Mammary epithelial cell (primary cell): ENCODE measurements at regions of chr14 and their contacts with region 1.

Region 1: DNA sequence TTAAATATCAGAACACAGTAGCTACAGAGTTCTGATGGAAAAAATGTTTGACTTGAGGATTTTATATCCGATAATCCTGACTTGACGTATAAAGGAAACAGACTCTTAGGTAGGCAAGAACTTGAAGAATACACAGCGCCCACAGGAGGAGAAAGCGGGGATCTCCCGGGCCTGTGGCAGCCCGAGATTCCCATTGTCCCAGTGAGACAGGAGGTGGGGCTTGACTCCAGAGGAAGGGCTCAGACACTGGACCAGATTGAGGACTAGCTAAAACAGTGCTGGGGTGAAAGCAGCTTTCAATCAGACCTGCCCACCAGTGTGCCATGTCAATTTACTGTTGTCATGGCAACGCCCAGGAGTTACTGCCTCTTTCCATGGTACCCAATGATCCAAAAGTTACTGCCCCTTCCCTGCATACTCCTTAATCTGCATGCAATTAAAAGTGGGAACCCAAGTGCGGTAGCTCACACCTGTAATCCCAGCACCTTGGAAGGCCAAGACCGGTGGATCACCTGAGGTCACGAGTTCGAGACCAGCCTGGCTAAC is 51.0 kb upstream of the C14orf180 start:
- DNase-seq: no peak
- H3K4me3 ChIP-seq: no peak overlapping the region
- H3K27ac ChIP-seq: no peak overlapping the region
- H3K4me1 ChIP-seq: no peaks in the 10 kb centered on the region
- H3K27me3 ChIP-seq: no peaks in the 10 kb centered on the region
- CTCF ChIP-seq: no peak

Region 2: GRCh38 chr14:104477666-104478380 is 50.7 kb before region 1 on chr14:
- CTCF ChIA-PET with region 1: no interaction called
- dilution Hi-C with region 1: loop called (anchors 5 kb)
- in situ Hi-C with region 1: no loop called
- intact Hi-C with region 1: no loop called
- DNase-seq: no peak
- H3K4me3 ChIP-seq: no peak overlapping the region
- H3K27ac ChIP-seq: no peak overlapping the region
- H3K4me1 ChIP-seq: no peaks in the 10 kb centered on the region
- H3K27me3 ChIP-seq: no peaks in the 10 kb centered on the region
- CTCF ChIP-seq: no peak

Region 3: GRCh38 chr14:104610749-104611310 is 82.3 kb after region 1 on chr14:
- CTCF ChIA-PET with region 1: no interaction called
- dilution Hi-C with region 1: loop called (anchors 10 kb)
- in situ Hi-C with region 1: no loop called
- intact Hi-C with region 1: no loop called
- DNase-seq: no peak
- H3K4me3 ChIP-seq: no peak overlapping the region
- H3K27ac ChIP-seq: no peak overlapping the region
- H3K4me1 ChIP-seq: no peaks in the 10 kb centered on the region
- H3K27me3 ChIP-seq: no peaks in the 10 kb centered on the region
- CTCF ChIP-seq: no peak

Region 4: GRCh38 chr14:104639889-104640548 is 111.5 kb after region 1 on chr14:
- CTCF ChIA-PET with region 1: no interaction called
- dilution Hi-C with region 1: no loop called
- in situ Hi-C with region 1: no loop called
- intact Hi-C with region 1: no loop called
- DNase-seq: peak; percentile 30
- H3K4me3 ChIP-seq: no peak overlapping the region
- H3K27ac ChIP-seq: no peak overlapping the region
- H3K4me1 ChIP-seq: peaks cover 4% of the 10 kb centered on the region
- H3K27me3 ChIP-seq: no peaks in the 10 kb centered on the region
- CTCF ChIP-seq: peak; percentile 85 to 95